ENCODE measurements at regions of chr7 and their contacts with region 1.

Region 1: GRCh38 chr7:91034459-91035368 is 229.5 kb upstream of the FZD1 start:
- DNase-seq: no peak
- ATAC-seq: peak; percentile 81

Region 2: GRCh38 chr7:90455163-90456030 is 579.3 kb before region 1 on chr7:
- intact Hi-C with region 1: loop called (anchors 10 kb)
- DNase-seq: no peak
- ATAC-seq: peak; percentile 74

Region 3: DNA sequence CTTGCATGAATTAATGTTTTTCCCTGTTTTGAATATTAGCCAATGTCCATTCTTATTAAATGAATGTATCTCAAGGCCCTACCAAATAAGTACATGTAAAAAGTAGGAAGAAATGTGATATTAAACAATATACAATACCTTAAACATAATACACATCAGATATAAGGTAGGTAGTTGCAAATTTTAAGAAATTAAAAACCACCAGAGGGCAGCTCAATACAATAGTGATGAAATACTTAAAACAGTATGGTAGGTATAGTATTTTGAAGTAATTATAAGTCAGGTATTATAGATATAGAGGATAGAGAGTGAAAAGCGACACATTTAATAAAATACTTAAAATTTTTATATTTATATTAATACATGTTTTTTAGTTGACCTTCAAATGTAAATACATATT is 482.2 kb before region 1 on chr7:
- intact Hi-C with region 1: loop called (anchors 10 kb)
- DNase-seq: no peak
- ATAC-seq: no peak

Measured in left ventricle myocardium superior (tissue), 1 donor.